ENCODE measurements at regions of chr11 and their contacts with region 1.

Region 1: GRCh38 chr11:117226388-117227385 is 5.2 kb downstream of the PCSK7 start:
- DNase-seq: peak in 1 of 2 donors; percentile 59
- H3K4me3 ChIP-seq: no peak overlapping the region
- H3K27ac ChIP-seq: no peak overlapping the region
- H3K4me1 ChIP-seq: peaks cover 3 to 10% of the 10 kb centered on the region in 2 donors
- H3K27me3 ChIP-seq: no peaks in the 10 kb centered on the region
- CTCF ChIP-seq: peak; percentile 75 to 93 (median 86)
- POLR2A ChIP-seq: no peak

Region 2: DNA sequence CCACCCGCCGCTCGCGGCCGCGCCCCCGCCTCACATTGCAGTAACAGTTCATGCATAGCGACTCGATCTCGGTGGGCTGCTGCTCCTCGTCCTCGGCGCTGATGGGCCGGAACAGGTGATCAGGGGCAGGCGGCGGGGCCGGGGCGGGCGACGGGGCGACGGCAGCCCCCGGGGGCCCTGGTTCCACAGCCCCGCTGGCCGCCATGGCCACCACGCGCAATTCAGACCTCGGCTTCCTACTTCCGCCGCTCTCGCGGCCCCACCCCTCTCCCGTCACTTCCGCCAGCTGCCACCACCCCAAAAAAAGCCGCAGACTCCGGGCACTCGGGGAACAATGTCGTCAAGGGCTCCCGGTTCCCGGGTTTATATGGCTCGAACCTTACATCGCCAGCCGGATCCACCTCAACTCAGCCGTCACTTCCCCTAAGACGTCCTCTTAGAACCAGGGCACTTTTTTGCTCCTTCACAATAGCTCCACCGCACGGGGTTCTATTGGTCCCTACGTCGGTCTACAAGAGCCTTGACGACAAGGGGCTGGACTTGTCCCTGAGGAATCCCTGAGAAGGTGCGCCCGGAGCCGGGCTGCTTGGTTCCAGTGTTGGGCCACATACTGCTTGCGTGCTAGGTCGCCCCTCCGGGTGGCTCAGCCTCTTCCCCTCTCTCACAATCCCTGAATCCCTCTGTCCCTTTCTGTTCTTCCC is 438.8 kb before region 1 on chr11 and contains the start of gene ZPR1:
- intact Hi-C with region 1: loop called (anchors 10 kb)
- DNase-seq: peak; percentile 77 to 83
- H3K4me3 ChIP-seq: peak within 1 kb of the TSS; percentile 76 to 99
- H3K27ac ChIP-seq: peak within 1 kb of the TSS; percentile 68 to 79
- H3K4me1 ChIP-seq: peaks cover 7 to 10% of the 10 kb centered on the region in 2 donors
- H3K27me3 ChIP-seq: no peaks in the 10 kb centered on the region
- CTCF ChIP-seq: peak in 1 of 4 experiments; percentile 16
- POLR2A ChIP-seq: peak; percentile 33 to 58
- total RNA-seq, gene ZPR1: 4.1 to 43.1 (median 22.3) TPM

Region 3: GRCh38 chr11:117143871-117144476 is 82.7 kb before region 1 on chr11 and contains the start of gene PAFAH1B2:
- intact Hi-C with region 1: no loop called
- DNase-seq: peak; percentile 95 to 96
- H3K4me3 ChIP-seq: peak within 1 kb of the TSS; percentile 81 to 91
- H3K27ac ChIP-seq: peak within 1 kb of the TSS; percentile 89 to 92
- H3K4me1 ChIP-seq: peaks cover 0 to 9% of the 10 kb centered on the region in 2 donors
- H3K27me3 ChIP-seq: no peaks in the 10 kb centered on the region
- CTCF ChIP-seq: no peak
- POLR2A ChIP-seq: peak; percentile 54 to 84
- total RNA-seq, gene PAFAH1B2: 62.8 to 154 (median 128) TPM

Region 4: DNA sequence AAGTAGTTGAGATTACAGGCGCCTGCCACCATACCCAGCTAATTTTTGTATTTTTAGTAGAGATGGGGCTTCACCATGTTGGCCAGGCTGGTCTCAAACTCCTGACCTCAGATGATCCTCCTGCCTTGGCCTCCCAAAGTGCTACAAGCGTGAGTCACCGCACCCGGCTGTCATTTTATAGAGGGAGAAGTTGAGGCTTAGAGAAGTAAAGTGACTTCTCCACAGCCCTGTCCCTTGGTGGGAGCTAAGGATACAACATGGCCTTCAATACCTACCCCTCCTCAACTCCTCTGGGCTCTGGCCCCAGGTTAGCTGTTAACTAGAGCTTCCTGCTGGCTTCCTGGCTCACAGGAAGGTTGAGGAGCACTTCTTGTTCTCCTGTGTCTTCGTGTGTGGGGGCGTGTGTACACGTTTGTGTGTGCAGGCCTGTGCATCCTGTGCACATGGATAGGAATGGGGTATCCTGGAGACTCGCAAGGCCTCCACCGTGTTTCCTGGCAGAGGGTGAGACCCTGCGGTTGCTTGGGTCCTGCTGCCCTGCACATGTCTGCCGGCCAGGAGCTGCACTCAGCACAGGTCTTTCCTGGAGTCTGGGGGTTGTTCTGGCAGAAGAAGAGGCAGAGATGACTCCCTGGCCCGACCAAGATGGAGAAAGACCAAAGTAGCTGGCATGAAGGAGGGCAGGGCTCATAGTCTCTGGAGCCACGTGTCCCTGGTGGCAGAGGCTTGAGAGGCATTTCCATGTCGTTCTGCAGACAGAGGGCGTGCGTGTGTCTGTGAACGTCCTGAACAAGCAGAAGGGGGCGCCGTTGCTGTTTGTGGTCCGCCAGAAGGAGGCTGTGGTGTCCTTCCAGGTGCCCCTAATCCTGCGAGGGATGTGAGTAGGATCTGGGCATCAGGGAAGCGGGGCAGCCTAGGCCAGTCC is 45.8 kb before region 1 on chr11:
- intact Hi-C with region 1: loop called (anchors 5 kb)
- DNase-seq: peak; percentile 73 to 85
- H3K4me3 ChIP-seq: peak overlapping the region in 1 of 2 donors; percentile 23
- H3K27ac ChIP-seq: peak overlapping the region; percentile 17 to 42
- H3K4me1 ChIP-seq: peaks cover 5 to 10% of the 10 kb centered on the region in 2 donors
- H3K27me3 ChIP-seq: no peaks in the 10 kb centered on the region
- CTCF ChIP-seq: peak; percentile 58 to 81 (median 72)
- POLR2A ChIP-seq: no peak

Measured in uterus (tissue), 4 donors.